Dorsolateral prefrontal cortex (tissue), 120 donors: ENCODE measurements at regions of chr9 and their contacts with region 1.

Region 1: GRCh38 chr9:72599879-72600534 is 78.6 kb downstream of the TMC1 start:
- DNase-seq: no peak
- H3K4me3 ChIP-seq: no peak overlapping the region
- H3K27ac ChIP-seq: no peak overlapping the region
- H3K27me3 ChIP-seq: no peaks in the 10 kb centered on the region
- CTCF ChIP-seq: no peak

Region 2: GRCh38 chr9:72703574-72703973 is 103.6 kb after region 1 on chr9:
- intact Hi-C with region 1: loop called in 1 of 2 experiments (anchors 5 kb)
- DNase-seq: peak in 4 of 10 donors; percentile 12 to 51 (median 44)
- H3K4me3 ChIP-seq: peak overlapping the region in 3 of 59 donors; percentile 7 to 22 (median 17)
- H3K27ac ChIP-seq: peak overlapping the region in 36 of 59 donors; percentile 7 to 80 (median 49)
- H3K27me3 ChIP-seq: no peaks in the 10 kb centered on the region
- CTCF ChIP-seq: peak in 1 of 56 donors; percentile 10

Region 3: GRCh38 chr9:72753266-72753893 is 153.4 kb after region 1 on chr9:
- intact Hi-C with region 1: loop called (anchors 5 to 10 kb)
- DNase-seq: peak in 2 of 10 donors; percentile 11 to 27
- H3K4me3 ChIP-seq: no peak overlapping the region
- H3K27ac ChIP-seq: no peak overlapping the region
- H3K27me3 ChIP-seq: peaks cover 0 to under 1% (median 0%) of the 10 kb centered on the region in 45 donors
- CTCF ChIP-seq: peak in 53 of 56 donors; percentile 14 to 72 (median 51)

Region 4: DNA sequence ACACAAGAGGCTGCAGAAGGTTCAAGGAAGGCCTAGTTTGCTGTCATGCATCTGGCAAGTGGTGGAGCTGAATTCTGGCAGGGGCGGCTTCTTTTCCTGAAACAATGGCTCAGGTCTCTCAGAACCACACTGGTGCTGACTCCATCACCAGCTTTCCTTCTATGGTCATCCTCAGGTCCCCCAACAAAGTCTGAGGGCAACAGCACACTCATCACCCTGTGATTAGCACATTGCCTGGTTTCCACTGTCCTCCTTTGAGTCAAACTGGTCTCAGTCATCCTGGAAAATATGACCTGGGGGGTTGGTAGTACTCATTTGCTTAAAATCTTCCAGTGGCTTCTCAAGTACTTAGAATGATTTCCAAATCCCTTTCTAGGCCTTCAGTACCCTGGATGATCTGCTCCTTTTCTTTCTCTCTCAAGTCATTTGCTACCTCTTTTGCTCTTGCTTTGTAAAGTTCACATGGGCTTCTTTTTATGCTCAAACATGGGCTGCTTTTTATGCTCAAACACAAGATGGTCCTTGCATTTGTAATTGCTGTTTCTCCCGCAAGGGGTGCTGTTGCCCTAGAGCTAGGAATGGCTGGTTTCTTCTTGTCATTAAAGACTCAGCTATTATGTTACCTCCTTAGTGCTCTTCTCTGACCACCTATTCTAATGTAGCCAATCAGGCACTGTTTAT is 207.9 kb after region 1 on chr9:
- intact Hi-C with region 1: no loop called
- DNase-seq: no peak
- H3K4me3 ChIP-seq: no peak overlapping the region
- H3K27ac ChIP-seq: no peak overlapping the region
- H3K27me3 ChIP-seq: no peaks in the 10 kb centered on the region
- CTCF ChIP-seq: no peak